GM12878 (cell line): ENCODE measurements at regions of chr17 and their contacts with region 1.

Region 1: DNA sequence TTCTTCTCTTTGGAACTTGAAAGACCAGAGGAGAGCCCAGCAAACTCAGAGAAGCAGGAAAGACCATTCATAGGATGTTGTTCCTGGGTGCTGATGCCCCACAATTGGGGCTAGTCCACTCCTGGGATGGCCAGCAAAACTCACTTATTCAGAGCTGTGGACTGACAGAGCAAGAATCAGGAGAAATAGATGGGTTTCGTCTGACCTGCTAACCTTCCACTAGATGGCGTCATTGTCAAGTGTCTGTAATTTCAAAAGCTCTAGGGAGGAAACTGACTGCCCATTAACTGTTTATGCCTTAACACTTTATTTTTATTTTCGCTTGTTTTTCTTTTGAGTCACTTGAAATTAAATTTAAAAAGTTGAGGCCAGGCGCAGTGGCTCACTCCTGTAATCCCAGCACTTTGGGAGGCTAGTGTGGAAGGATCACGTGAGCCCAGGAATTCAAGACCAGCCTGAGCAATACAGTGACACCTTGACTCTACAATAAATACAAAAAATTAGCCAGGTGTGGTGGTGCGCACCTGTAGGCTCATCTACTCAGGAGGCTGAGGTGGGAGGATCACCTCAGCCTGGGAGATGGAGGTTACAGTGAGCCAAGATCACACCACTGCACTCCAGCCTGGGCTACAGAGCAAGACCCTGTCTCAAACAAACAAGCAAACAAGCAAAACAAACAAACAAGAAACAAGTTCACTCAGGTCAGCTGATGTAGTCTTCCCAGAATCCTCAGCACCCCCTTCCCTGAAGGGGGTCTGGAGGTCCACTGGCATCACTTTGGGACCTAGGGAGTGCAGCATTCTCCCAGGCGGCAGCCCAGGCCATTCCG is 28.6 kb upstream of the MILR1 start:
- DNase-seq: no peak
- ATAC-seq: peak; percentile 91
- H3K4me3 ChIP-seq: no peak overlapping the region
- H3K27ac ChIP-seq: no peak overlapping the region
- H3K4me1 ChIP-seq: no peaks in the 10 kb centered on the region
- H3K27me3 ChIP-seq: no peaks in the 10 kb centered on the region
- CTCF ChIP-seq: peak; percentile 66 to 72 (median 69)
- EP300 ChIP-seq: no peak
- POLR2A ChIP-seq: no peak
- RAD21 ChIP-seq: peak; percentile 91

Region 2: GRCh38 chr17:64139542-64139941 is 280.8 kb before region 1 on chr17:
- CTCF ChIA-PET with region 1: no interaction called
- POLR2A ChIA-PET with region 1: no interaction called
- RAD21 ChIA-PET with region 1: no interaction called
- SMC1A ChIA-PET with region 1: no interaction called
- in situ Hi-C with region 1: no loop called
- intact Hi-C with region 1: no loop called
- DNase-seq: no peak
- ATAC-seq: no peak
- H3K4me3 ChIP-seq: no peak overlapping the region
- H3K27ac ChIP-seq: no peak overlapping the region
- H3K4me1 ChIP-seq: no peaks in the 10 kb centered on the region
- H3K27me3 ChIP-seq: no peaks in the 10 kb centered on the region
- CTCF ChIP-seq: no peak
- EP300 ChIP-seq: no peak
- POLR2A ChIP-seq: no peak
- RAD21 ChIP-seq: no peak

Region 3: GRCh38 chr17:64313534-64313933 is 106.8 kb before region 1 on chr17:
- CTCF ChIA-PET with region 1: interaction called, 627 read pairs
- POLR2A ChIA-PET with region 1: interaction called, 3 read pairs
- RAD21 ChIA-PET with region 1: interaction called, 75 read pairs
- SMC1A ChIA-PET with region 1: interaction called, 190 read pairs
- in situ Hi-C with region 1: no loop called
- intact Hi-C with region 1: no loop called
- DNase-seq: no peak
- ATAC-seq: no peak
- H3K4me3 ChIP-seq: no peak overlapping the region
- H3K27ac ChIP-seq: no peak overlapping the region
- H3K4me1 ChIP-seq: no peaks in the 10 kb centered on the region
- H3K27me3 ChIP-seq: no peaks in the 10 kb centered on the region
- CTCF ChIP-seq: no peak
- EP300 ChIP-seq: no peak
- POLR2A ChIP-seq: no peak
- RAD21 ChIP-seq: no peak

Region 4: GRCh38 chr17:64373722-64374121 is 46.6 kb before region 1 on chr17:
- CTCF ChIA-PET with region 1: interaction called, 11 read pairs
- POLR2A ChIA-PET with region 1: no interaction called
- RAD21 ChIA-PET with region 1: interaction called, 3 read pairs
- SMC1A ChIA-PET with region 1: interaction called, 31 read pairs
- in situ Hi-C with region 1: no loop called
- intact Hi-C with region 1: no loop called
- DNase-seq: no peak
- ATAC-seq: no peak
- H3K4me3 ChIP-seq: no peak overlapping the region
- H3K27ac ChIP-seq: no peak overlapping the region
- H3K4me1 ChIP-seq: peaks cover under 1% of the 10 kb centered on the region
- H3K27me3 ChIP-seq: no peaks in the 10 kb centered on the region
- CTCF ChIP-seq: no peak
- EP300 ChIP-seq: no peak
- POLR2A ChIP-seq: no peak
- RAD21 ChIP-seq: no peak

Region 5: DNA sequence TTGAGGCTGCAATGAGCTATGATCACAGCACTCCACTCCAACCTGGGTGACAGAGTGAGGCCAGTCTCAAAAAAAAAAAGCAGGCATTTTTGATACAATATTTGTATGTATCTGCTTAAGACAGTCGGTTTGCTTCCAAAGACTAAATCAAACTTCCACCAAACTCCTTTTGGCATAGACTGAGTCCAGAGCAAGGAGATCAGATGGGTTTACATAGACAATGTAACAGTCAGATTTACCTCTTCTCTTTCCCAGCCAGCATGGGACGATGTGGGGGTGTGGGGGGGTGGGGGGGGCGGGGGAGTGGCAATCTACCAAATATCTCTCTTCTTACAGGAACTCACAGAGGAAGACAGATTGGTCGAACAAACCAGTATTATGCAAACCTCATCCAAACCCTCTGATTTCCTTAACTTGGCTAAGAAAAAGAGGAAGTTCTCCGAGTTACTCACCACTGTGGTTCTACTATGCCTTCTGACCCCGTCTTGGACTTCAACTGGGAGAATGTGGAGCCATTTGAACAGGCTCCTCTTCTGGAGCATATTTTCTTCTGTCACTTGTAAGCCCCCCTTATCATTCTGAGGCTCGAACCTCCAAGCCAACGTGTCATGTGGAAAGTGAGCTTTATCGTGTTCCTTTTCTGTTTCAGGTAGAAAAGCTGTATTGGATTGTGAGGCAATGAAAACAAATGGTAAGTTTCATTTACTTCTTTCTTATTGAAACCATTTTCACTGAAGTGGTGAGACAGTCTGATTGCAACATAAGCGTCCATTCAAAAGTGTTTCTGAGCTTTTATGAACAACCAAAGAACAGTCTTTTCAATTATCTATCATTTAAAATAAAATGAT is 28.5 kb after region 1 on chr17 and contains the start of gene MILR1:
- CTCF ChIA-PET with region 1: interaction called, 26 read pairs
- POLR2A ChIA-PET with region 1: interaction called, 3 read pairs
- RAD21 ChIA-PET with region 1: interaction called, 4 read pairs
- SMC1A ChIA-PET with region 1: interaction called, 4 read pairs
- in situ Hi-C with region 1: no loop called
- intact Hi-C with region 1: no loop called
- DNase-seq: peak; percentile 77
- ATAC-seq: peak; percentile 96
- H3K4me3 ChIP-seq: peak within 1 kb of the TSS; percentile 60; the same call in 1 of the 2 replicates
- H3K27ac ChIP-seq: peak within 1 kb of the TSS; percentile 64
- H3K4me1 ChIP-seq: peaks cover 4% of the 10 kb centered on the region
- H3K27me3 ChIP-seq: no peaks in the 10 kb centered on the region
- CTCF ChIP-seq: no peak
- EP300 ChIP-seq: 0 out of 4 replicates have a peak, but pooled peaks of 1 of the 2 experiments have one; percentile 28
- POLR2A ChIP-seq: no peak
- RAD21 ChIP-seq: no peak
- polyA plus RNA-seq, gene MILR1: 16.2 to 25.0 TPM

Region 6: GRCh38 chr17:64506576-64507477 is 86.5 kb after region 1 on chr17 and contains the start of gene CEP95:
- CTCF ChIA-PET with region 1: interaction called, 350 read pairs
- POLR2A ChIA-PET with region 1: no interaction called
- RAD21 ChIA-PET with region 1: interaction called, 10 read pairs
- SMC1A ChIA-PET with region 1: interaction called, 12 read pairs
- in situ Hi-C with region 1: no loop called
- intact Hi-C with region 1: no loop called
- DNase-seq: peak; percentile 90
- ATAC-seq: peak; percentile 75
- H3K4me3 ChIP-seq: peak within 1 kb of the TSS; percentile 100
- H3K27ac ChIP-seq: peak within 1 kb of the TSS; percentile 100
- H3K4me1 ChIP-seq: peaks cover 4% of the 10 kb centered on the region; the same call in 1 of the 2 replicates
- H3K27me3 ChIP-seq: no peaks in the 10 kb centered on the region
- CTCF ChIP-seq: no peak
- EP300 ChIP-seq: 0 out of 4 replicates have a peak, but pooled peaks have one; percentile 9 to 20
- POLR2A ChIP-seq: peak; percentile 90
- RAD21 ChIP-seq: no peak
- polyA plus RNA-seq, gene CEP95: 17.7 to 22.6 TPM

Region 7: DNA sequence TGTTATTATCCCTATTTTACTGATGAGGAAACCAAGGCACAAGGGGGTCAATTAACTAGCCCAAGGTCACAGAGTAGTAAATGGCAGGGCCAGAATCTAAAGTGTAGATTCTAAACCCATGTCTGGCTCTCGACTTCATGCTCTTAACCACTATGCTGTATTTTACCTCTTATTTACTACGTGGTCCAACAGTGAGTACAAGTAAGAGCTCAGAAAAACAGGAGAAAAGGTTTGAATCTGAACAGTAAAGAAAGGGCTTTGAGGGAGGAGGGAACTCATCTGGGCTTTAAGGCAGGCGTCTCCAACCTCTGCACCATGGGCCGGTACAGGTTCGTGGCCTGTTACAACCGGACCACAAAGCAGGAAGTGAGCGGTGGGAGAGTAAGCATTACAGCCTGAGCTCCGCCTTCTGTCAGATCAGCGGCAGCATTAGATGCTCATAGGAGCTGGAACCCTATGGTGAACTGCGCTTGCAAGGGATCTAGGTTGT is 178.9 kb after region 1 on chr17:
- CTCF ChIA-PET with region 1: interaction called, 17 read pairs
- POLR2A ChIA-PET with region 1: no interaction called
- RAD21 ChIA-PET with region 1: interaction called, 11 read pairs
- SMC1A ChIA-PET with region 1: interaction called, 24 read pairs
- in situ Hi-C with region 1: no loop called
- intact Hi-C with region 1: loop called (anchors 5 kb)
- DNase-seq: no peak
- ATAC-seq: peak; percentile 98
- H3K4me3 ChIP-seq: peak overlapping the region; percentile 37; the same call in 1 of the 2 replicates
- H3K27ac ChIP-seq: peak overlapping the region; percentile 76
- H3K4me1 ChIP-seq: peaks cover 4% of the 10 kb centered on the region; the same call in 1 of the 2 replicates
- H3K27me3 ChIP-seq: no peaks in the 10 kb centered on the region
- CTCF ChIP-seq: no peak
- EP300 ChIP-seq: no peak
- POLR2A ChIP-seq: peak; percentile 66
- RAD21 ChIP-seq: no peak

Region 8: DNA sequence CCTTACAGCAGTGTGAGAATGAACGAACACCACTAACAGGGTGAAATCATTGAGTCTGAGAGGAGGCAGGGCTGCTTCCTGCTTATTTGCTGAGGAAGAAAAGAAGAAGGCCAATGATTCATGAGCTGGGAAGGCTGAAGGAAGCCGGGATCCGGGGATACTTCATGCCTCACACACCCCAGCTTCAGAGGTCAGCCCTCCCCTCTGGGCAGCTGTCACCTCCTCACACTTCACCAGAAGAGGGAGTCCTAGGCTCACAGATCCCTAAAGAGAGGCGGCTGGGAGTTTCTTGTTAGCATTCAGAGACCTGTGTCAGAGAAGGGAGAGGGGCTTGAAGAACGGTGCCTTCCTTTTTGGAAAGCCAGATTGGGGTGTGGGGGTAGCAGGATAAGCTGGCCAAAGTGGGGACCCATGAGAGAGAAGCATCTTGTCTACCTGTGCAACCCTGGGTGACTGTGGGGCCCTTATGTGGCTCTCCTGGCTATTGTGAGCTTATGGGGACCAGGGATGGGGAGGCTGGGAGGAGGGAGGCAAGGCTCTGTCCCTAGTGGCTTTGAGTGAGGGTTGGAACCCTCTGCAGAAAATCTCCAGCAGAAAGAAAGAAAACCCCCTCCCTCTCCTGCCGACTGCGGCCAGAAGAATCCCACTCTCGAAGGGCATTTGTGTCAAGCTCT is 811.4 kb after region 1 on chr17:
- CTCF ChIA-PET with region 1: no interaction called
- POLR2A ChIA-PET with region 1: no interaction called
- RAD21 ChIA-PET with region 1: no interaction called
- SMC1A ChIA-PET with region 1: no interaction called
- in situ Hi-C with region 1: no loop called
- intact Hi-C with region 1: no loop called
- DNase-seq: peak; percentile 12
- ATAC-seq: peak; percentile 72
- H3K4me3 ChIP-seq: no peak overlapping the region
- H3K27ac ChIP-seq: no peak overlapping the region
- H3K4me1 ChIP-seq: peaks cover 20% of the 10 kb centered on the region
- H3K27me3 ChIP-seq: no peaks in the 10 kb centered on the region
- CTCF ChIP-seq: peak; percentile 72 to 87 (median 81)
- EP300 ChIP-seq: no peak
- POLR2A ChIP-seq: no peak
- RAD21 ChIP-seq: peak; percentile 94